KBM-7 (cell line): ENCODE measurements at regions of chr18 and their contacts with region 1.

Region 1: DNA sequence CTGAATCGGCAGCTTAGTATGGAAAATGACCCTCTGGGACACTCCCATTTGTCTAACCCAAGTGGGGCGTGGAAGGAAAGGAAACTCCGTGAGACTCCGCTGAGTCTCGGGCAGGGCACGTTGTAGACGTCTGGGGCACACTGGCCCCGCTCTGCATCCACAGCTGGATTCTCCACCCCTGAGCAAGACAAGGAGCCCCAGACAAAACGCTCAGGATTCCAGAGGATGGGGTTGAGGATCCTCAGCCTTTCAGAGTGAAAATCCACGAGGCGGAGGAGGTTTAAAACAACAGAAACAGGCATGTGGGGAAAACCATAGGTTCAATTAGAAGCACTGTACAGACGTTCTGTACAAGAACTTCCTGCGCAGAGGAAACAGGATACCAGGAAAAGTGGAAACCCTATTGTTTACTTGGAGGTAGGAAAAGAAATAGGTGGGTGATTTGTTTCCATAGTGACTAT is 124.9 kb upstream of the ZNF236 start:
- DNase-seq: no peak

Region 2: GRCh38 chr18:76405681-76406356 is 291.7 kb before region 1 on chr18:
- in situ Hi-C with region 1: loop called (anchors 10 kb)
- DNase-seq: peak; percentile 39

Region 3: GRCh38 chr18:76476665-76477561 is 220.6 kb before region 1 on chr18:
- in situ Hi-C with region 1: no loop called
- DNase-seq: peak; percentile 48

Region 4: GRCh38 chr18:76875390-76876325 is 178.2 kb after region 1 on chr18:
- in situ Hi-C with region 1: no loop called
- DNase-seq: peak; percentile 65